CD4-positive, alpha-beta memory T cell (primary cell): ENCODE measurements at regions of chr11 and their contacts with region 1.

Region 1: DNA sequence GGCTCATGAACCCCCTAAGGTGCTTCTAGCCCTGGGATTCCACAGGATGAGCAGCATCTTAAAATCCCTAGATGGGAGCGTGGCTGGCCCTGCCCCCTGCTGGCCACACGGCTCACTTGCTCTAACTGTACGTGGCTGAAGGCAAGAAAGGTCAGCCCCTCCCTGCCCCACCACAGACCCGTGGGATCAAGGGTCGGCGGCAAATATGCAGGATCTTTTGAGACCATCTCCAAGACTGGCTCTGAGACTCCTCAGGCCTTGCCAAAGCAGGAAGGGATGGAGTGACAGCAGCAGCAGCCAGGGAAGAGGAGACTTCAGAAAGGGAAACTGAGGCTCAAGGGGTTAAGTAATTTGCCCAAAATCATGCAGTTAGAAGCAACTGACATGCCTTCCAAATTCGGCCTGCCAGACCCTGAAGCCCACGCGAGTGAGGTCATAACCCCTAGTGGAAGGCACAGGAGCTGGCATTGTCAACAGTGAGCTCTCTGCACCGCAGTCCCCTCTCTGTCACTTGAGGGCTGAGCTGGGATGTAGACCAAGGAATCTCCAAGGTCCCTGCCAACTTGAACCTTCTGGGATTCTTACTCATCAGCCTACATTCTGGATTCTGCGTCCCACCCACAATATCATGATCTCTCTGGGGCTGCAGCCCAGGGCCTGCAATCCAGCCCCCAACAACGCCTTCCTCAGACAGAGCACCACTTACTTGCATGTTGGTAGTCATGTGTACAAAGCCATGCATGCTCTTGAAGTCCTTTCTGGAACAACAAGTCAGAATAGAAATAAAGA is 31.4 kb downstream of the CREB3L1 start:
- DNase-seq: peak; percentile 44 to 61 (median 53)
- H3K4me3 ChIP-seq: no peak overlapping the region
- H3K4me3 Mint-ChIP-seq: no peak overlapping the region
- H3K27ac ChIP-seq: no peak overlapping the region
- H3K27ac Mint-ChIP-seq: peak overlapping the region in 1 of 7 donors; percentile 69
- H3K4me1 ChIP-seq: peaks cover 6% of the 10 kb centered on the region
- H3K4me1 Mint-ChIP-seq: peaks cover 4 to 11% (median 6%) of the 10 kb centered on the region in 4 donors
- H3K27me3 ChIP-seq: no peaks in the 10 kb centered on the region
- H3K27me3 Mint-ChIP-seq: no peaks in the 10 kb centered on the region

Region 2: DNA sequence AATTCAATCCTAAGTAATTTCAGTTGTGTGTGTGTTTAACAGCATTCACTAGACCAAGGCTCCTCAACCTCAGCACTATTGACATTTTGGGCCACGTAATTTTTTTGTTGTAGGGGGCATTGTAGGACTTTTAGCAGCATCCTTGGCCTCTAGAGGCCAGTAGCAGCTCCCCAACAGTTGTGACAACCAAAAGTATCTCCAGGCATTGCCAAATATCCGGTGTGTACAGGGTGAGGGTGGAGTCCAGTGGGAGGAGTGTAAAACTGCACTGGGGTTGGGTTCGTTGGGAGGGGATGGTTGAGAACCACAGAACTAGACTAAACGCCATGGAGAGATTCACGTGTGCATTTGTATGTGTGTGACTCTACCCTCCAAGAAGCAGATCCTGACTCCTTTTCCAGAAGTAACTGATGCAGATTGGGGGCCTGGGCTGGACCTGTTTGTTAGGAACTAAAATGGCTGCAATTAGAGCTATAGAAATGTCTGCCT is 181.6 kb before region 1 on chr11:
- CTCF ChIA-PET with region 1: no interaction called
- POLR2A ChIA-PET with region 1: interaction called, 4 read pairs
- intact Hi-C with region 1: loop called (anchors 1 kb)
- DNase-seq: peak; percentile 68 to 82 (median 77)
- H3K4me3 ChIP-seq: no peak overlapping the region
- H3K4me3 Mint-ChIP-seq: peak overlapping the region; percentile 1 to 62 (median 46)
- H3K27ac ChIP-seq: no peak overlapping the region
- H3K27ac Mint-ChIP-seq: peak overlapping the region; percentile 26 to 82 (median 78)
- H3K4me1 ChIP-seq: peaks cover 19% of the 10 kb centered on the region
- H3K4me1 Mint-ChIP-seq: peaks cover 12 to 26% (median 18%) of the 10 kb centered on the region in 4 donors
- H3K27me3 ChIP-seq: no peaks in the 10 kb centered on the region
- H3K27me3 Mint-ChIP-seq: no peaks in the 10 kb centered on the region

Region 3: GRCh38 chr11:46198246-46199240 is 110.3 kb before region 1 on chr11:
- CTCF ChIA-PET with region 1: no interaction called
- POLR2A ChIA-PET with region 1: no interaction called
- intact Hi-C with region 1: no loop called
- DNase-seq: no peak
- H3K4me3 ChIP-seq: no peak overlapping the region
- H3K4me3 Mint-ChIP-seq: no peak overlapping the region
- H3K27ac ChIP-seq: no peak overlapping the region
- H3K27ac Mint-ChIP-seq: no peak overlapping the region
- H3K4me1 ChIP-seq: no peaks in the 10 kb centered on the region
- H3K4me1 Mint-ChIP-seq: no peaks in the 10 kb centered on the region
- H3K27me3 ChIP-seq: no peaks in the 10 kb centered on the region
- H3K27me3 Mint-ChIP-seq: peaks cover 10 to 19% of the 10 kb centered on the region in 2 donors

Region 4: DNA sequence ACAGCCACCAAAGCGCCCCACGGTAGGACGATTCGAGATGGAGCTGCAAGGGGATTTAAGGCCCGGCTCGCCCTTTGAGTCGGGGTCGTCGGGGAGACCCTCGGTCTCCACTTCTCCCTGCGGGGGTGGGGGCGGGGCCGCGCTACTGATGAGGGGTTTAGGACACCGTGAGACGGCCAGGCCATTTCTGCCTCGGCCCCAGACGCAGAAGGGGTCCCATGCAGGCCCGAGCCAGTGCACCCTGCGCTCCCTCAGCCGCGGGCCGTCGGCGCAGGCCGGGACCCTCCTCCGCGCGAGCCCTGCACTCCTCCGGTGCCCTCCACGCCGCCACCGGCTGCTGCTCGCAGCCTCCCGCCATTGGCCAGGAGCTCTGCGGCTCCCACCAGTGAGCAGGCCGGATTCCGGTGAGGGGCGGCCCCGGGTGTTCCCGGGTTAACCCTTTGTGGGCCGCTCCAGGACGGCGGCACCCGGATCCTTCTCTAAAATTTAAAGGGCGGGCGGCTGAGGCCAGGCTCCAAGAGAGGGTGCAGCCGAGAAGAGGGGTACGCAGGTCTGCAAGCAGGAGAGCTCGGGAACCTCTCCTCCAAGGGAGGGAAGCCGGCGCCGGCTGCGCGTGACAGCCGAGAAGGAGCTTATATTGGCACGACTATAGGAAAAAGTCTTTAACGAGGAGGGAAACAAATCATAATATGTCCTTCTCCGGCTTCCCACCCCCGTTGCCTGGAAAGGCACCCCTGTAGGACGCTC is 13.3 kb before region 1 on chr11:
- CTCF ChIA-PET with region 1: interaction called, 18 read pairs
- POLR2A ChIA-PET with region 1: interaction called, 3 read pairs
- intact Hi-C with region 1: no loop called
- DNase-seq: peak; percentile 73 to 79 (median 75)
- H3K4me3 ChIP-seq: peak overlapping the region; percentile 5 to 64
- H3K4me3 Mint-ChIP-seq: peak overlapping the region; percentile 80 to 93 (median 86)
- H3K27ac ChIP-seq: no peak overlapping the region
- H3K27ac Mint-ChIP-seq: peak overlapping the region in 1 of 7 donors; percentile 72
- H3K4me1 ChIP-seq: peaks cover 10% of the 10 kb centered on the region
- H3K4me1 Mint-ChIP-seq: peaks cover 3 to 11% (median 5%) of the 10 kb centered on the region in 4 donors
- H3K27me3 ChIP-seq: peaks cover 7% of the 10 kb centered on the region
- H3K27me3 Mint-ChIP-seq: peaks cover 2 to 7% of the 10 kb centered on the region in 2 donors

Region 5: DNA sequence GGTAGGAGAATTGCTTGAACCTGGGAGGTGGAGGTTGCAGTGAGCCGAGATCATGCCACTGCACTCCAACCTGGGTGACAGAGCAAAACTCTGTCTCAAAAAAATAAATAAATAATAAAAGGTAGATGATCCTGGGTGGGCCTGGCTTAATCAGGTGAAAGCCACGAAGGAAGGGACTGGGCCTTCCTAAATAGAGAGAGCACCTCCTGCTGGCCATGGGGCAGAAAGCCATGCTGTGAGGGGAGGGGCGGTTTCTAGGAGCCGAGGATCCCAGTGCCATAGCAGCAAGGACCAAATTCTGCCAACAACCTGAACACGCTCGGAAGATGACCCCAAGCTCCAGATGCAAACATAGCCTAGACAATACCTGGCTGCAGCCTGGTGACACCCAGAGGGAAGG is 13.9 kb after region 1 on chr11:
- CTCF ChIA-PET with region 1: interaction called, 187 read pairs
- POLR2A ChIA-PET with region 1: no interaction called
- intact Hi-C with region 1: no loop called
- DNase-seq: no peak
- H3K4me3 ChIP-seq: no peak overlapping the region
- H3K4me3 Mint-ChIP-seq: no peak overlapping the region
- H3K27ac ChIP-seq: no peak overlapping the region
- H3K27ac Mint-ChIP-seq: no peak overlapping the region
- H3K4me1 ChIP-seq: peaks cover 12% of the 10 kb centered on the region
- H3K4me1 Mint-ChIP-seq: peaks cover 14 to 33% (median 21%) of the 10 kb centered on the region in 4 donors
- H3K27me3 ChIP-seq: no peaks in the 10 kb centered on the region
- H3K27me3 Mint-ChIP-seq: no peaks in the 10 kb centered on the region

Region 6: DNA sequence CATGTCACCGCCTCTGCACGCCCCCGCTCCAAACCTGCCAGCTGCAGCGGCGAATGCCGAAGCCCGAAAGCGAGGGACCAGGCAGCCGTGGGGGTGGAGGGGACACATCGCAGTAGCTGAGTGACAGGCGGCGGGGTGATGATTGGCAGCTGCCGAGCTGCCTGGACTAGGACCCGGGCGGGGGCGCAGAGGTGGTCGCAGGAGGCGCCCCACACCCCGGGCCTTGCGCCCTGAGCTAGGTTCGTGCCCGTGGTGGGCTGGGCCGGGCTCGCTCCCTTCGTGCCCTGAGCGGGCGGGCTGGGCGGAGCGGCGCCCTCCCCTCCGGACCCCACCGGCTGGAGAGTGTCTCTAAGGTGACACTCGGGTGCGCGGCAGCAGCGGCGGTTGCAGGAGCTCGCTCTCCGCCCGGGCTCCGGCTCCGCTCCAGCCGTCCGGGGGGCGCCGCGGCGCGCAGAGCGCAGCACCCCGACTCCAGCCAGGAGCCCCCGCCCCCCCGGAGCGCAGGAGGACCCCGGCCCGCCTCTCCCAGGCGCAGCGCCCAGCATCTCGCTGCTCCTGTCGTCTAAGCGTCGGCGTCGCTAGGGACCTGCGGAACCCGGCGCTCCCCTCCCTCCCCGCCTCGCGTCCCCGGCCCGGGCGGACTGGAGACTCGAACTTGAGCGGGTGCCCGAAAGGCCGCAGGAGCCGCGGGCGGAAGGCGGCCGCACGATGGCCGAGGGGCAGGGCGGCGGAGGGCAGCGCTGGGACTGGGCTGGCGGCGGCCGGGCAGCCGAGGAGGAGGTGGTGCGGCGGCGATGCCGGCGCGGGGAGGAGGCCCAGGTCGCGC is 24.0 kb after region 1 on chr11:
- CTCF ChIA-PET with region 1: interaction called, 187 read pairs
- POLR2A ChIA-PET with region 1: interaction called, 3 read pairs
- intact Hi-C with region 1: no loop called
- DNase-seq: peak in 4 of 5 donors; percentile 30 to 59 (median 44)
- H3K4me3 ChIP-seq: peak overlapping the region; percentile 15 to 54
- H3K4me3 Mint-ChIP-seq: peak overlapping the region; percentile 87 to 96 (median 90)
- H3K27ac ChIP-seq: peak overlapping the region; percentile 42
- H3K27ac Mint-ChIP-seq: peak overlapping the region in 6 of 7 donors; percentile 84 to 98 (median 96)
- H3K4me1 ChIP-seq: peaks cover 74% of the 10 kb centered on the region
- H3K4me1 Mint-ChIP-seq: peaks cover 33 to 74% (median 61%) of the 10 kb centered on the region in 4 donors
- H3K27me3 ChIP-seq: no peaks in the 10 kb centered on the region
- H3K27me3 Mint-ChIP-seq: no peaks in the 10 kb centered on the region

Region 7: DNA sequence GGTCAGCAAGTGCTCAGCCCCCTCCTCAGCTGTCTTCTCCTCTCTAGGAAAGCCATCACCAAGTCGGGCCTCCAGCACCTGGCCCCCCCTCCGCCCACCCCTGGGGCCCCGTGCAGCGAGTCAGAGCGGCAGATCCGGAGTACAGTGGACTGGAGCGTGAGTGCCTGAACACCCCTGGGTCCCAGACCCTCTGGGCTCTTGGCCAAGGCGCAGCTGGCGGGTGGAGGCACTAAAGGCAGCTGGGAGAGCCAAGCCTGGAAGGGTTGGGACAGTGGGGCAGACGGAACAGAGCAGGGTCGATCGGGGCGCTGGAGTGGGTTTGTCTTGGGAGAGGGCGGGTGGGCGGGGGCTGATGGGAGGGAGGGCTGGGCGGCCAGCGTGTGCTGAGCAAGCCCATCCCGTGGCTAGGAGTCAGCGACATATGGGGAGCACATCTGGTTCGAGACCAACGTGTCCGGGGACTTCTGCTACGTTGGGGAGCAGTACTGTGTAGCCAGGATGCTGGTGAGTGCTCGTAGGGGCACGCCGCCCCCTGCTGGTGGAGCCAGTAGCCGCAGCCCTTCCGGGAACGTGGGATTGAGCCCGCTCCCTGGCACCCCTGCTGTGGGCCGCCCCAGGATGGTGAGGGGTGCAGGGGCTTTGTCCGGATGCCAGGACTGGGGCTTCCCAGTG is 58.6 kb after region 1 on chr11:
- CTCF ChIA-PET with region 1: interaction called, 5 read pairs
- POLR2A ChIA-PET with region 1: no interaction called
- intact Hi-C with region 1: loop called (anchors 5 kb)
- DNase-seq: peak; percentile 68 to 74 (median 73)
- H3K4me3 ChIP-seq: no peak overlapping the region
- H3K4me3 Mint-ChIP-seq: no peak overlapping the region
- H3K27ac ChIP-seq: peak overlapping the region; percentile 22
- H3K27ac Mint-ChIP-seq: peak overlapping the region in 3 of 7 donors; percentile 24 to 53 (median 42)
- H3K4me1 ChIP-seq: peaks cover 55% of the 10 kb centered on the region
- H3K4me1 Mint-ChIP-seq: peaks cover 21 to 55% (median 40%) of the 10 kb centered on the region in 4 donors
- H3K27me3 ChIP-seq: no peaks in the 10 kb centered on the region
- H3K27me3 Mint-ChIP-seq: no peaks in the 10 kb centered on the region